ENCODE measurements at regions of chr10 and their contacts with region 1.

Region 1: DNA sequence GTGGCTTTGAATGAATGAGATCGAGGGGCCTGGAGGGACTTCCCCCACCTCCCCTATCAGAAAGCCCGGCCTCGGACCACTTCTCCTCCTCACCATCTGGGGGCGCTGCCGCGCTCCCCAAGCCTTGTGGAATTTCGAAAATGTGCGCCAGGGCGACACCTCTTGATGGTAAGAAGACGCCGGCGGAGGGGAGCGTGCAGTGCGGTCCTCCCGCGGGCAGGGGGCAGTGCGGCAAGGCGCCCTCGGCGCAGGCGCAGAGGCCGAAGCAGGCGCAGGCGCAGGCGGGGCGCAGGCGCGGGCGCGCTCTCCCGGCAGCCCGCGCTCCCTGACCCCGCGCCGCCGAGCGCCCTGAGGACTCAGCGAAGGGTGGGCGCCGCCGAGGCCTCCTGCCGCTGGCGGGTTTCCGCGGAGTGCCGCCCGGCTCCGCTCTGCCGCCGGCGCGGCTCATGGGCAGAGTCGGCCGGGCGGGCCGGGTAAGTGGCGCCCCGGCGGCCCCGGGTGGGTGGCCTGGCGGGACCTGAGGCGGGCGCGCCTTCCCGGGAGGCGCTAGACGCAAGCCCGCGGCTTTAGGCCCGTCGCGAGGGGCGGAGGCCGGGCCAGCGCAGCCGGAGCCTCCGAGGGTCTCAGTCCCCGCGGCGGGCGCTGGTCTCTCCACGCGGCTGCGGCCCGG is at the start of gene RBM17:
- DNase-seq: peak; percentile 94 to 99 (median 98)
- ATAC-seq: peak; percentile 86
- H3K4me3 ChIP-seq: peak within 1 kb of the TSS; percentile 92
- H3K4me3 Mint-ChIP-seq: peak within 1 kb of the TSS; percentile 85
- H3K27ac ChIP-seq: peak within 1 kb of the TSS; percentile 26 to 33
- H3K27ac Mint-ChIP-seq: peak within 1 kb of the TSS; percentile 77
- H3K4me1 ChIP-seq: peaks cover 50% of the 10 kb centered on the region
- H3K4me1 Mint-ChIP-seq: peaks cover 73% of the 10 kb centered on the region
- H3K27me3 ChIP-seq: no peaks in the 10 kb centered on the region
- H3K27me3 Mint-ChIP-seq: no peaks in the 10 kb centered on the region
- CTCF ChIP-seq: peak; percentile 100
- total RNA-seq, gene RBM17: 143 to 150 TPM

Region 2: DNA sequence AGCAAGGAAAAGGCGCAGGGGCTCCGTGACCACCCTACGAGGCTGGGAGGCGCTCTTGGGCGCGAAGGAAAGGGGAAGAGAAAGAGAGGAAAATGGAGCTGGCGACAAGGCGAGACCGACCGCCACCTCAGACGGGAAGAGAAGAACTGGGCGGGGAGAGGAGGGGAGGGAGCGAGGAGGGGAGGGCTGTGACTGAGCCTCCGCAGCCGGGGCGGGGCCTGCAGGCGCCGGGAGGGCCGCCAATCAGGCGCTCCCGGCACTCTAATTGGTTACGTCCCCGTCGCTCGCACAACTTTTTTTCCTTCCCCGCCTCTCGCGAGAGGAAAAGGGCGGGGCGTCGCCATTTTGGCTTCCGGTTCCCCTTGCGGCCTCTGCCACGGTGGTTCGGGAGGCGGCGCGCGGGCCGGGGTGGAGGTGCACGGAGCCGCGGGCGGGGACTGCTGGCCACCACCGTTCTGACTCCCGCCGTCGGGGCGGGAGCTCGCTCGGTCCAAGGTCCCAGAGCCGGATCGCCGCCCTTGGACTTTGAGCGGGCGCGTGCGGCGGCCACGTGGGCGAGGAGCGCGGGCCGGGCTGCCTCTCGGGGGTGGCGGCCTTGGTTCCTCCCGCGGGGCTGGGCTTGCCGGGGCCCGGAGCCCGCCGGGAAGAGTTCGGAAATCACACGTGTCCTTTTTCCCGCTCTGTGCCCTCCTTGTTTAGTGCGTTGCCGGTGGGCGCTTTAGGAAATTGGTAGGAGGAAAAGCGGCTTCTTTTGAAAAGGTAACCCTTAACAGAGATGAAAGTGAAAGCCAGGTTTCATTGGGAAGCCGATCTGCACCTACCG is 275.4 kb before region 1 on chr10 and contains the start of gene GDI2:
- CTCF ChIA-PET with region 1: no interaction called
- POLR2A ChIA-PET with region 1: no interaction called
- intact Hi-C with region 1: loop called in 1 of 2 experiments (anchors 5 kb)
- DNase-seq: peak; percentile 92 to 98 (median 96)
- ATAC-seq: peak; percentile 94
- H3K4me3 ChIP-seq: peak within 1 kb of the TSS; percentile 74
- H3K4me3 Mint-ChIP-seq: peak within 1 kb of the TSS; percentile 95
- H3K27ac ChIP-seq: peak within 1 kb of the TSS; percentile 92 to 97
- H3K27ac Mint-ChIP-seq: peak within 1 kb of the TSS; percentile 89
- H3K4me1 ChIP-seq: peaks cover 42% of the 10 kb centered on the region
- H3K4me1 Mint-ChIP-seq: peaks cover 60% of the 10 kb centered on the region
- H3K27me3 ChIP-seq: no peaks in the 10 kb centered on the region
- H3K27me3 Mint-ChIP-seq: no peaks in the 10 kb centered on the region
- CTCF ChIP-seq: no peak
- total RNA-seq, gene GDI2: 78.1 to 82.3 TPM

Region 3: GRCh38 chr10:6014241-6014761 is 74.6 kb before region 1 on chr10:
- CTCF ChIA-PET with region 1: interaction called, 48 read pairs
- POLR2A ChIA-PET with region 1: interaction called, 17 read pairs
- intact Hi-C with region 1: loop called (anchors 1 kb)
- DNase-seq: peak; percentile 32 to 92 (median 60)
- ATAC-seq: peak; percentile 100
- H3K4me3 ChIP-seq: no peak overlapping the region
- H3K4me3 Mint-ChIP-seq: no peak overlapping the region
- H3K27ac ChIP-seq: peak overlapping the region; percentile 68 to 89
- H3K27ac Mint-ChIP-seq: peak overlapping the region; percentile 90
- H3K4me1 ChIP-seq: peaks cover 17% of the 10 kb centered on the region
- H3K4me1 Mint-ChIP-seq: peaks cover 12% of the 10 kb centered on the region
- H3K27me3 ChIP-seq: no peaks in the 10 kb centered on the region
- H3K27me3 Mint-ChIP-seq: no peaks in the 10 kb centered on the region
- CTCF ChIP-seq: peak; percentile 89

Region 4: DNA sequence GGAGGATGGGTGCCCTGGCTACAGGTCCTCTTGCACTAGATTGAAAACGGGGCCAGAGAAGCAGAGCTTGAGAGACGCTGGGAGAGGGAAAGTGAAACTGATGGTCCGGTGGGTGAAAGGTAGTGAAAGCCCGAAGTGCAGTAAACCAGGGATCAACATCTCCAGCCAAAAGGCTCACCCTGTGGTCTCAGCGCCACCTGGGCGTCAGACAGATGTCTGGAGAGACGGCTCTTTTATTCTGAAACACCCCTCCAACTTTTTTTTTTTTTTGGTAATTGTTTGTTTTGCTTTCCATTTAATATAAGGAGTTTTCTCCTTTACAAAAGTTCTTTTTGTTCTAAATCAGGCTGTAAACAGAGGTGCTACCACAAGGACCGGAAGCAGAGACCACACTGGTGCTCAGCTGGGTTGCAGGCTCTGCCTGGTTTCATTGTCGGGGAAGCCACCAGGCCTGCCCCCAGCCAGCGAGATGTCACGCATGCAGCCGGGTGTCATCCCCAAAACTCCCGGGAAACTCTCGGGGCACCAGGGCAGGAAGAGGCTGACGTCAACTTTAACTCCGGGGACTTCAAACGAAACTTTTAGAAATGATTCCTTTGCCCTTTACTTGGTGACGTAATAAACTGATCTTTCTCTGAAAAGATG is 37.9 kb before region 1 on chr10:
- CTCF ChIA-PET with region 1: interaction called, 70 read pairs
- POLR2A ChIA-PET with region 1: interaction called, 68 read pairs
- intact Hi-C with region 1: loop called (anchors 1 to 2 kb)
- DNase-seq: peak; percentile 72 to 99 (median 80)
- ATAC-seq: peak; percentile 81
- H3K4me3 ChIP-seq: peak overlapping the region; percentile 63
- H3K4me3 Mint-ChIP-seq: peak overlapping the region; percentile 90
- H3K27ac ChIP-seq: peak overlapping the region; percentile 76 to 89
- H3K27ac Mint-ChIP-seq: peak overlapping the region; percentile 98
- H3K4me1 ChIP-seq: peaks cover 85% of the 10 kb centered on the region
- H3K4me1 Mint-ChIP-seq: peaks cover 86% of the 10 kb centered on the region
- H3K27me3 ChIP-seq: no peaks in the 10 kb centered on the region
- H3K27me3 Mint-ChIP-seq: no peaks in the 10 kb centered on the region
- CTCF ChIP-seq: no peak

Region 5: GRCh38 chr10:6068422-6068821 is 20.4 kb before region 1 on chr10:
- CTCF ChIA-PET with region 1: interaction called, 36 read pairs
- POLR2A ChIA-PET with region 1: interaction called, 51 read pairs
- intact Hi-C with region 1: no loop called
- DNase-seq: peak in 9 of 14 experiments; percentile 14 to 76 (median 47)
- ATAC-seq: peak; percentile 82
- H3K4me3 ChIP-seq: peak overlapping the region; percentile 29
- H3K4me3 Mint-ChIP-seq: peak overlapping the region; percentile 75
- H3K27ac ChIP-seq: peak overlapping the region in 1 of 2 donors; percentile 44
- H3K27ac Mint-ChIP-seq: peak overlapping the region; percentile 84
- H3K4me1 ChIP-seq: peaks cover 63% of the 10 kb centered on the region
- H3K4me1 Mint-ChIP-seq: peaks cover 84% of the 10 kb centered on the region
- H3K27me3 ChIP-seq: no peaks in the 10 kb centered on the region
- H3K27me3 Mint-ChIP-seq: no peaks in the 10 kb centered on the region
- CTCF ChIP-seq: no peak

Region 6: GRCh38 chr10:6401562-6402348 is 312.9 kb after region 1 on chr10:
- CTCF ChIA-PET with region 1: interaction called, 13 read pairs
- POLR2A ChIA-PET with region 1: interaction called, 3 read pairs
- intact Hi-C with region 1: loop called in 1 of 2 experiments (anchors 5 kb)
- DNase-seq: peak; percentile 35 to 84 (median 49)
- ATAC-seq: peak; percentile 88
- H3K4me3 ChIP-seq: no peak overlapping the region
- H3K4me3 Mint-ChIP-seq: peak overlapping the region; percentile 30
- H3K27ac ChIP-seq: no peak overlapping the region
- H3K27ac Mint-ChIP-seq: peak overlapping the region; percentile 0
- H3K4me1 ChIP-seq: peaks cover 11% of the 10 kb centered on the region
- H3K4me1 Mint-ChIP-seq: peaks cover 29% of the 10 kb centered on the region
- H3K27me3 ChIP-seq: no peaks in the 10 kb centered on the region
- H3K27me3 Mint-ChIP-seq: no peaks in the 10 kb centered on the region
- CTCF ChIP-seq: peak; percentile 83

Measured in CD4-positive, alpha-beta T cell (primary cell).